ENCODE measurements at regions of chr11 and their contacts with region 1.

Region 1: DNA sequence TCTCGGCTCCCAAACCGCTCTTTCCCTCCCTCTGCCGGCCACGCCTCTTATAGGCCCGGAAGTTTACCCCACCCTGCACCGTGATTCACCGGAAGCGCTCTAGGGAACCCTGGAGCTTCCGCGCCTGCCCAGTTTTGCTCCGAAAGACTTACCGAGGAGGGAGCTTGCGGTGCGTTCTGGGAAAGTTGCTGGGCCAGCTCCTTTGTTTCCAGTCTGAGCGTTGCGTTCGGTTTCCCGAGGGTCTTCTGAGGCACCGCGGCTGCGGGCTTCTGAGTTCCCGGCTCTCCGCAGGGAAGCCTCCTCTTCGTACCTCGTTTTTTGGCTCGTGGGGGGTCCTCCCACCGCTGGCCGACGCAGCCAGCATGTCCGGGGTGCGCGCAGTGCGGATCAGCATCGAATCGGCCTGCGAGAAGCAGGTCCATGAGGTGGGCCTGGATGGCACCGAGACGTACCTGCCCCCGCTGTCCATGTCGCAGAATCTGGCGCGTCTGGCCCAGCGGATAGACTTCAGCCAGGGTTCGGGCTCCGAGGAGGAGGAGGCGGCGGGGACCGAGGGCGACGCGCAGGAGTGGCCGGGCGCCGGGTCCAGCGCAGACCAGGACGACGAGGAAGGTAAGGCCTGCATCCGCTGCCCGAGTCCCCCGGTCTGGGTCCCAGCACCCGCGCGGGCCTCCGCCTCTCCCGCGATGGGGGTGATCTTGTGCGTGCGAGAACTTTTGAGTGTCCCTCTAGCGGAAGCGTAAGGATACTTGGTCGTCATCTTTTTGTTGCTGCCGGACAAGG is at the start of gene MED17:
- DNase-seq: peak; percentile 93
- ATAC-seq: peak; percentile 96
- H3K4me3 Mint-ChIP-seq: peak within 1 kb of the TSS; percentile 98
- H3K27ac Mint-ChIP-seq: peak within 1 kb of the TSS; percentile 96
- H3K4me1 Mint-ChIP-seq: peaks cover 32% of the 10 kb centered on the region
- H3K27me3 Mint-ChIP-seq: no peaks in the 10 kb centered on the region
- CTCF ChIP-seq: peak; percentile 50
- total RNA-seq, gene MED17: 30.1 to 31.3 TPM

Region 2: DNA sequence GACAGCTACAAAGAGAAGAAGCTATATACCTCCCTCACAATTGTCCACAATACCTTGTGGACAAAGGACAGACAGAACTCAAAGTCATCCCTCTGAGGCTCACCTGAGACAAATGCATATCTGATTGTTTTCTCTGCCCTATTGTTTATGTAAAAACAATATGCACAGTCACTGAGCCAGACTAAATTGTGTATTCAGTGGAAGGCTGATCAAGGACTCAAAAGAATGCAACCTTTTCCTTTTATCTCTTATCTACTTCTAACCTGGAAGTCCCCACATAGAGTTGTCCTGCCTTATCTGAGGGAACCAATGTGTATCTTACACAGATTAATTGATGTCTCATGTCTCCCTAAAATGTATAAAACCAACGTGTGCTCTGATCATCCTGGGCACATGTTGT is 14.2 kb before region 1 on chr11:
- CTCF ChIA-PET with region 1: interaction called, 8 read pairs
- POLR2A ChIA-PET with region 1: interaction called, 11 read pairs
- intact Hi-C with region 1: no loop called
- DNase-seq: no peak
- ATAC-seq: no peak
- H3K4me3 Mint-ChIP-seq: no peak overlapping the region
- H3K27ac Mint-ChIP-seq: no peak overlapping the region
- H3K4me1 Mint-ChIP-seq: no peaks in the 10 kb centered on the region
- H3K27me3 Mint-ChIP-seq: no peaks in the 10 kb centered on the region
- CTCF ChIP-seq: no peak

Region 3: GRCh38 chr11:94139421-94139820 is 355.1 kb after region 1 on chr11:
- CTCF ChIA-PET with region 1: no interaction called
- POLR2A ChIA-PET with region 1: no interaction called
- intact Hi-C with region 1: no loop called
- DNase-seq: no peak
- ATAC-seq: no peak
- H3K4me3 Mint-ChIP-seq: no peak overlapping the region
- H3K27ac Mint-ChIP-seq: no peak overlapping the region
- H3K4me1 Mint-ChIP-seq: peaks cover 71% of the 10 kb centered on the region
- H3K27me3 Mint-ChIP-seq: no peaks in the 10 kb centered on the region
- CTCF ChIP-seq: no peak